ENCODE measurements at regions of chr7 and their contacts with region 1.

Region 1: GRCh38 chr7:74043523-74043951 is 15.6 kb downstream of the ELN start:
- DNase-seq: no peak
- H3K4me3 ChIP-seq: peak overlapping the region in 1 of 7 experiments; percentile 48
- H3K27ac ChIP-seq: no peak overlapping the region
- H3K4me1 ChIP-seq: peaks cover 0 to 41% (median 7%) of the 10 kb centered on the region in 4 experiments
- H3K27me3 ChIP-seq: no peaks in the 10 kb centered on the region

Region 2: DNA sequence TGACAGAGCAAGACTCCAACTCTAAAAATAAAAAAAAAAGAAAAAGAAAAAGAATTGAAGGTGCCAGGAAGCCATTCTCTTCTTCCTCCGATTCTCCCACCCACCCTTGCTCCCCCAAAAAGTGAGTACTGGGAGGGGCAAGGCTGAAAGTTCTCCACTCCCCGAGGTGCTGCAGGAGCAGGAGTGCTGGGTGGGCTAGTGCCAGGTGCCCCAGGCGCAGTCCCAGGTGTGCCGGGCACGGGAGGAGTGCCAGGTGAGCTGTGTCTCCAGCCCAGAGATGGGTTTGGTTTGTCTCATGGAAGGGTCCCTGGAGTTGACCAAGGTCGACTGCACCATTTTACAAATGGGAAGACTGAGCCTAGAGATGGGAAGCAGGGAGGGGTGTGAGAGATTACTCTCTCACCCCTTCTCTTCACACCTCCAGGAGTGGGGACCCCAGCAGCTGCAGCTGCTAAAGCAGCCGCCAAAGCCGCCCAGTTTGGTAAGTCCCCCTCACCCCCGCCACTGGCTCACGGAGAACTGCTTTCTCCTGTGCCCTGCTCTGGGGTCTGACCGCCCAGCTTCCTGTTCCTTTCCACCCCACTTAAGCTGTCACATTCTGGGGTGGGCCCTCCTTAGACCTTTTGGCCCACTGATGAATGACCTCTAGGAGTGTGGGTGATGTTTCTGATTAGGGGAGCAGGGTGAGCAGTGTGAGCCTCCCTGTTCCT is 13.8 kb after region 1 on chr7:
- CTCF ChIA-PET with region 1: interaction called, 10 read pairs
- POLR2A ChIA-PET with region 1: no interaction called
- DNase-seq: peak in 2 of 3 donors; percentile 49 to 55
- H3K4me3 ChIP-seq: no peak overlapping the region
- H3K27ac ChIP-seq: no peak overlapping the region
- H3K4me1 ChIP-seq: peaks cover 0 to 16% (median 4%) of the 10 kb centered on the region in 4 experiments
- H3K27me3 ChIP-seq: no peaks in the 10 kb centered on the region